Activated CD8-positive, alpha-beta T cell treated with anti-CD3 and anti-CD28 coated beads, Interleukin-2, amount 10 ng/mL, durations not matched to agents 7 days and 5 days (primary cell): ENCODE measurements at regions of chr4 and their contacts with region 1.

Region 1: DNA sequence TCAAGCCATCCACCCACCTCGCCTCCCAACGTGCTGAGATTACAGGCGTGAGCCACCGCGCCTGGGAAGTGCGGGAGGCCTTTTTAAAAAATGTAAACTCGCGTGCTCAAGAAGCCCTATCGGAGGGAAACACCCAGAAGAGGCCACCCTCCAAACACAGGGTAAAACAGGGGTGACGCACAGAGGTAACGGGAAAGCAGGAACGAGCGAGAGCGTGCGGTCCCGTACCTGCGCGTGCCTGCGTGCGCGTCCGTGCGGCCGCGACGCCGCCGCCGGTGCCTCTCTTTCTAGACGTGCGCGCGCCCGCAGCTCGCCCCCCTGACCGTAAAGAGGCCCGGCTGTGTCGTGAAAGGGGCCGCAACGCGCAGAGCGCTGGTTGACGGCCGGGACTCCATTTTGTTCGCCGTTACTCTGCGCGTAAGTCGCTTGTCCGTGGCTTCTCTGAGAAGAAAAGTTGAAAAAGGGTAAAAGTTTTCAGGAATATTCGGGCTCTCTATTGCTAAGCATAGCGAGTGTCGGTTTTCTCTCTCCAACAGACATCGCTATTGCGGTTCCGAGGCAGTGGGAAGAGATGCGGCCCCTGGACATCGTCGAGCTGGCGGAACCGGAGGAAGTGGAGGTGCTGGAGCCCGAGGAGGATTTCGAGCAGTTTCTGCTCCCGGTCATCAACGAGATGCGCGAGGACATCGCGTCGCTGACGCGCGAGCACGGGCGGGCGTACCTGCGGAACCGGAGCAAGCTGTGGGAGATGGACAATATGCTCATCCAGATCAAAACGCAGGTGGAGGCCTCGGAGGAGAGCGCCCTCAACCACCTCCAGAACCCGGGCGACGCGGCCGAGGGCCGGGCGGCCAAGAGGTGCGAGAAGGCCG is at the start of gene MRFAP1:
- DNase-seq: peak; percentile 95
- ATAC-seq: peak; percentile 76
- H3K4me3 Mint-ChIP-seq: peak within 1 kb of the TSS; percentile 97
- H3K27ac Mint-ChIP-seq: peak within 1 kb of the TSS; percentile 98
- H3K4me1 Mint-ChIP-seq: peaks cover 25% of the 10 kb centered on the region
- H3K27me3 Mint-ChIP-seq: no peaks in the 10 kb centered on the region
- total RNA-seq, gene MRFAP1: 105 TPM

Region 2: GRCh38 chr4:6608758-6609414 is 31.6 kb before region 1 on chr4:
- CTCF ChIA-PET with region 1: no interaction called
- POLR2A ChIA-PET with region 1: no interaction called
- DNase-seq: peak; percentile 26
- ATAC-seq: peak; percentile 27
- H3K4me3 Mint-ChIP-seq: no peak overlapping the region
- H3K27ac Mint-ChIP-seq: no peak overlapping the region
- H3K4me1 Mint-ChIP-seq: peaks cover 14% of the 10 kb centered on the region
- H3K27me3 Mint-ChIP-seq: no peaks in the 10 kb centered on the region

Region 3: DNA sequence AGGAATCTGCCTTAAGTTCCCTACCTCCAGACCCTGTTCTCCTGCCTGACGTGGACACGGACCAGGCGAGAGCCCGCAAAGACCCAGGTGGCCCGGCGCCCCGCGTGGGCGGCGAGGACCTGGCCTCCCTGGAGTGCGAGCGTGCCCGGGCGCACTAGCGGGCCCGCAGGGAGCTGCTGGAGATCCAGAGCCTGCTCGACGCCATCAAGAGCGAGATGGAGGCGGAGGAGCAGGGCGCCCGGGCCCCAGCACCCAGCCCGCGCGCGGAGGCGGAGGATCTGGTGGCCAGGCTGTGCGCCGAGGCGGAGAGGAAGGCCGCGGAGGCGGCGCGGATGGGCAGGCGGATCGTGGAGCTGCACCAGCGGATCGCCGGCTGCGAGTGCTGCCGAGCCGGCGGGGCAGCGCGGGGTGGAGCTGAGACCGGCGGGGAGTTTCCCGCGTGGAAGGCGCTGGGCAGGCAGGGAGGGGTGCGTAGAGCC is 18.1 kb after region 1 on chr4:
- CTCF ChIA-PET with region 1: interaction called, 3 read pairs
- POLR2A ChIA-PET with region 1: interaction called, 16 read pairs
- DNase-seq: peak; percentile 37
- ATAC-seq: peak; percentile 82
- H3K4me3 Mint-ChIP-seq: peak overlapping the region; percentile 63
- H3K27ac Mint-ChIP-seq: no peak overlapping the region
- H3K4me1 Mint-ChIP-seq: peaks cover 18% of the 10 kb centered on the region
- H3K27me3 Mint-ChIP-seq: peaks cover 31% of the 10 kb centered on the region

Region 4: DNA sequence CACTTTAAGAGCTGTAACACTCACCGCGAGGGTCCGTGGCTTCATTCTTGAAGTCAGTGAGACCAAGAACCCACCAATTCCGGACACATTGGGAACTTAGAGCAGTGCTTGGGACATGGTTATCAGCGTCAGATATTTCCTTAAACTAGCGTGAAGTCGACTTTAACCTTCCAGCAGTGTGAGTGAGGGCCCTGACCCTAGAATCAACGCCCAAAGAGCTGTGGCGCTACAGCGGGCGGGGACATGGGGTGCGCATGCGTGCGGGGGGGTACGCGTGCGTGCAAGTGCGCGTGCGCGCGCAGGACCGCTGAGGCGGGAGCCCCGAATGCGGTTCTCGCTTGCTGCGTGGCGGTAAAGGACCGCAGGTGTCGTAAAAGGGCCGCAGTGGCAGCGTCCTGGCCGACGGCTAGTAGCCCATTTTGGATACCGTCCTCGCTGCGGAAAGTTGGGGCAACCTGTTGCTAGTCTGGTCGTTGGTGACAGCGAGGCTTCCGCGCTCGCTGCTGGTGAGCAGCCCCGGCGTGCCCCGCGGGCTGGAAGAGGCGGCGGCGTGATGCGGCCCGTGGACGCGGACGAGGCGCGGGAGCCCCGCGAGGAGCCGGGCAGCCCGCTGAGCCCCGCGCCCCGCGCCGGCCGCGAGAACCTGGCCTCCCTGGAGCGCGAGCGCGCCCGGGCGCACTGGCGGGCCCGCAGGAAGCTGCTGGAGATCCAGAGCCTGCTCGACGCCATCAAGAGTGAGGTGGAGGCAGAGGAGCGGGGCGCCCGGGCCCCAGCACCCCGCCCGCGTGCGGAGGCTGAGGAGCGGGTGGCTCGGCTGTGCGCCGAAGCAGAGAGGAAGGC is 33.4 kb after region 1 on chr4:
- CTCF ChIA-PET with region 1: interaction called, 27 read pairs
- POLR2A ChIA-PET with region 1: interaction called, 65 read pairs
- DNase-seq: peak; percentile 96
- ATAC-seq: peak; percentile 75
- H3K4me3 Mint-ChIP-seq: peak overlapping the region; percentile 94
- H3K27ac Mint-ChIP-seq: peak overlapping the region; percentile 100
- H3K4me1 Mint-ChIP-seq: peaks cover 45% of the 10 kb centered on the region
- H3K27me3 Mint-ChIP-seq: no peaks in the 10 kb centered on the region

Region 5: GRCh38 chr4:6695660-6696630 is 55.4 kb after region 1 on chr4:
- CTCF ChIA-PET with region 1: interaction called, 3 read pairs
- POLR2A ChIA-PET with region 1: interaction called, 26 read pairs
- DNase-seq: peak; percentile 72
- ATAC-seq: peak; percentile 77
- H3K4me3 Mint-ChIP-seq: peak overlapping the region; percentile 73
- H3K27ac Mint-ChIP-seq: peak overlapping the region; percentile 96
- H3K4me1 Mint-ChIP-seq: peaks cover 88% of the 10 kb centered on the region
- H3K27me3 Mint-ChIP-seq: no peaks in the 10 kb centered on the region